Activated CD4-positive, alpha-beta memory T cell treated with anti-CD3 and anti-CD28 coated beads for 36 hours (primary cell): ENCODE measurements at regions of chr5 and their contacts with region 1.

Region 1: GRCh38 chr5:150436141-150436680 is 13.3 kb downstream of the RPS14 start:
- DNase-seq: peak; percentile 92
- H3K4me3 Mint-ChIP-seq: no peak overlapping the region
- H3K27ac Mint-ChIP-seq: peak overlapping the region; percentile 46
- H3K4me1 Mint-ChIP-seq: peaks cover 9% of the 10 kb centered on the region
- H3K27me3 Mint-ChIP-seq: no peaks in the 10 kb centered on the region

Region 2: DNA sequence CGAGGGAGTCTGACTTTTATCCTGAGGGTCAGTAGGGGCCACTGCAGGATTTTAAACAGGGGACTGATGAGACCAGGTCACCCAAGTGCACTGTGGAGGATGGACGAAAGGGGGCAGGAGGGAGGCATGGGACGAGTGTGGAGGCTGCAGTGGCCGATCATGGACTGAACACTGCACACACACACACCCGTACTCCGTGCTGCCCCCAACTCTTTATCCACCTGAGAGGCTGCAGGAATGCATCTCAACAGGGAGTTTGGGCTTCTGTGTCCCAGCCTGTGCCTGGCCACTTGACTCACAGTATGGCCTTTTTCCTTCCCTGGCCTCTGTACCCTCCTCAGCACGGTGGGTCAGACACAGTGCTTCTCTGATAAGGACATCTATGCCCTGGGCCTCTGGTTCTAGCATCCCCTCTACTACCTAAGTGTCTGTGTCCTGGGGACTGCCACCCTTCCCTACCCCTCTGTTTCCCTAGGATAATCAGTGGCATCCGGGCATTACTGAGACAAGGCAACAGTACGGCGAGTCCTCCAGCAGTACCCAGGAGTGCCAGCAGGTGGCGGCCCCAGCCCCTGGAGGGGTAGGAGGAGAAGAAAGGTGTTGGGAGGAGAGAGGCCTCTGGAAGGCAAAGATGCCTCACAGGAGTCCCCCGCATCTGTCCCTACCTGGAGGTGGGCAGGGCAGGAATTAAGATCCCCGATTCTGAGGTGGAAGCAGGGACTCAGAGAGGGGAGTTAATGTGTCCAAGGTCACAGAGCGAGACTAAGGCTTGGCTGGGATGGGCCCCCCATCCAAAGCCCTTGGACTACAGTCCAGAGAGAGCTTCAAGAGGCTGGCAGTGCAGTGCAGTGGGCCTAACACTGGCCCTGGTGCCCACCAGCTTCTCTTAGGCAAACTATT is 274.7 kb before region 1 on chr5:
- CTCF ChIA-PET with region 1: interaction called, 3 read pairs
- POLR2A ChIA-PET with region 1: no interaction called
- intact Hi-C with region 1: loop called (anchors 1 kb)
- DNase-seq: peak; percentile 84
- H3K4me3 Mint-ChIP-seq: no peak overlapping the region
- H3K27ac Mint-ChIP-seq: no peak overlapping the region
- H3K4me1 Mint-ChIP-seq: no peaks in the 10 kb centered on the region
- H3K27me3 Mint-ChIP-seq: peaks cover 20% of the 10 kb centered on the region

Region 3: DNA sequence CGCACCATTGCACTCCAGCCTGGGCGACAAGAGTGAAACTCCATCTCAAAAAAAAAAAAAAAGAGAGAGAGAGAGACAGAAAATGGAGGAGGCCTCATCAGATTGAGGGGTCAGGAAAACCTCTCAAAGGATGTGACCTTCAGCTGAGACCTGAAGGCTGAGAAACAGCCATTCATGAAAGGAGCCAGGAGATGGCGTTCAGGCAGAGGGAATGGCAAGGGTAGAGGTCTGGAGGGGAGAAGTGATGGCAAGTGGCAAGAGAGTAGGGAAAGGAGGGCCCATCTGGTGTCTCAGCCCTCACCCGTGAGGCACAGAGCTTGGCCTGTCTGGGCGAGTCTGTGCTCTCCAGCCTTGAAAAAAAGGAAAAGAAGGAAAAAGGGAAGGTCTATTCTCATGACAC is 163.7 kb before region 1 on chr5:
- CTCF ChIA-PET with region 1: interaction called, 4 read pairs
- POLR2A ChIA-PET with region 1: no interaction called
- intact Hi-C with region 1: loop called (anchors 2 kb)
- DNase-seq: peak; percentile 21
- H3K4me3 Mint-ChIP-seq: no peak overlapping the region
- H3K27ac Mint-ChIP-seq: no peak overlapping the region
- H3K4me1 Mint-ChIP-seq: no peaks in the 10 kb centered on the region
- H3K27me3 Mint-ChIP-seq: no peaks in the 10 kb centered on the region

Region 4: DNA sequence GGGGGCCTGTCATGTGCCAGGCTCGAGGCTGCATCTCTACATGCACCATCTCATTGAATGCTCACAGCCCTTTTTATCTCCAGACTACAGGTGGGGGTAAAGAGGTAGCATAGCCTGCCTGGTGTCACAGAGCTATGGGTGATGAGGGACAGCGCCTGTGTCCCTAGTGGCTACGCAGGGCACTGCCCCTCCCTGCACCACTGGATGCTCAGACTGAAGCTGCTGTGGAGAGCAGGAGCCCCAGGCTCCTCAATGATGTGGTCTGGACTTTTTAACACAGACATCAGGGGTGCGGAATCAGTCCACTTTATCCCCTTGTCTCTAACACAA is 149.4 kb before region 1 on chr5:
- CTCF ChIA-PET with region 1: no interaction called
- POLR2A ChIA-PET with region 1: no interaction called
- intact Hi-C with region 1: no loop called
- DNase-seq: no peak
- H3K4me3 Mint-ChIP-seq: no peak overlapping the region
- H3K27ac Mint-ChIP-seq: no peak overlapping the region
- H3K4me1 Mint-ChIP-seq: no peaks in the 10 kb centered on the region
- H3K27me3 Mint-ChIP-seq: no peaks in the 10 kb centered on the region

Region 5: DNA sequence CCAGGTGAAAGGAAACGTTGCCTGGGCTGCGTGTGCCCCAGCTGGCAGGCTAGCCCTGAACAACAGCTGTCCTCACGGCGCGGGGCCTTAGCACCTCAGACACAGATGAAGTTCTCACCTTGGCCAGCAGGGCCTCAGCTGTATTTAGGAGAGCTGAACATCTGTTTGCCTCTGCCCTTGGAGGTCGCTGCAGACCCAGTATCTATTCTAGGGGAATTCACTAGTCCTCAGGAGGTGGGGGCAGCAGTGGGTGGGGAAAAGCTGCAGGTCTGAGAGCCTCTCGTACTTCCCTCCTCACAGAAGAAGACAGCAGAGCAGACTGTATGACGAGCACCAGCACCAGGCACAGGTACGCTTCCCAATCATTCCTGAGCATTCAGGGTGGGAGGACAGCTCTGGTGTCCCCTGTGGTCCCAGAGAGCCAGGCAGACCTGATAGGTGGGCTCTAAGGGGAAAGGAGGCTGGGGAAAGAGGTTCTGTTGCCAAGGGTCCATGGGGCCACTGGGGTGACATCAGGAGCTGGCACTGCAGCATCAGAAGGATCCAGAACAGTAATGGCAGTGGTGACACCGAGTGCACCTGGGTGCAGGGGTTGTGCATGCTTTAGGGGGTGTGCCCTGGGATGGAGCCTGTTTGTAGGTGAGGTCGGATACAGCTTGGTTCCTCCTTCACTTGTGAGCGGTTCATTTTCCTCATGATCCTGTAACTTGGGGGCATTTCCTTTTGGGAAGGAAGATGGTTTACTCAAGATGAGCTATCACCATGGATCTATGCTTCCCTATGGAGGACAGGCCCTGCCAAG is 37.3 kb before region 1 on chr5:
- CTCF ChIA-PET with region 1: interaction called, 28 read pairs
- POLR2A ChIA-PET with region 1: interaction called, 4 read pairs
- intact Hi-C with region 1: loop called (anchors 1 kb)
- DNase-seq: no peak
- H3K4me3 Mint-ChIP-seq: no peak overlapping the region
- H3K27ac Mint-ChIP-seq: no peak overlapping the region
- H3K4me1 Mint-ChIP-seq: no peaks in the 10 kb centered on the region
- H3K27me3 Mint-ChIP-seq: no peaks in the 10 kb centered on the region

Region 6: GRCh38 chr5:150449517-150450339 is 13.5 kb after region 1 on chr5 and contains the start of gene RPS14:
- CTCF ChIA-PET with region 1: interaction called, 11 read pairs
- POLR2A ChIA-PET with region 1: no interaction called
- intact Hi-C with region 1: no loop called
- DNase-seq: peak; percentile 96
- H3K4me3 Mint-ChIP-seq: peak within 1 kb of the TSS; percentile 91
- H3K27ac Mint-ChIP-seq: peak within 1 kb of the TSS; percentile 99
- H3K4me1 Mint-ChIP-seq: peaks cover 32% of the 10 kb centered on the region
- H3K27me3 Mint-ChIP-seq: no peaks in the 10 kb centered on the region
- total RNA-seq, gene RPS14: 3,748 to 3,882 TPM